ENCODE measurements at regions of chr14 and their contacts with region 1.

Region 1: GRCh38 chr14:105375635-105376057 is 22.7 kb upstream of the TEX22 start:
- DNase-seq: no peak
- H3K4me3 ChIP-seq: no peak overlapping the region
- H3K27ac ChIP-seq: no peak overlapping the region
- H3K4me1 ChIP-seq: no peaks in the 10 kb centered on the region
- H3K27me3 ChIP-seq: no peaks in the 10 kb centered on the region
- CTCF ChIP-seq: no peak
- EP300 ChIP-seq: no peak
- POLR2A ChIP-seq: no peak

Region 2: GRCh38 chr14:105223260-105223659 is 152.4 kb before region 1 on chr14:
- in situ Hi-C with region 1: no loop called
- intact Hi-C with region 1: no loop called
- DNase-seq: no peak
- H3K4me3 ChIP-seq: no peak overlapping the region
- H3K27ac ChIP-seq: no peak overlapping the region
- H3K4me1 ChIP-seq: no peaks in the 10 kb centered on the region
- H3K27me3 ChIP-seq: no peaks in the 10 kb centered on the region
- CTCF ChIP-seq: no peak
- EP300 ChIP-seq: no peak
- POLR2A ChIP-seq: no peak

Region 3: GRCh38 chr14:105448706-105449111 is 73.1 kb after region 1 on chr14:
- in situ Hi-C with region 1: no loop called
- intact Hi-C with region 1: loop called (anchors 10 kb)
- DNase-seq: peak; percentile 66
- H3K4me3 ChIP-seq: no peak overlapping the region
- H3K27ac ChIP-seq: no peak overlapping the region
- H3K4me1 ChIP-seq: peaks cover 0 to 4% (median 3%) of the 10 kb centered on the region in 4 donors
- H3K27me3 ChIP-seq: no peaks in the 10 kb centered on the region
- CTCF ChIP-seq: peak; percentile 82 to 92 (median 88)
- EP300 ChIP-seq: no peak
- POLR2A ChIP-seq: no peak

Region 4: GRCh38 chr14:105517096-105517495 is 141.4 kb after region 1 on chr14:
- in situ Hi-C with region 1: loop called in 2 of 4 experiments (anchors 10 kb)
- intact Hi-C with region 1: loop called (anchors 10 kb)
- DNase-seq: no peak
- H3K4me3 ChIP-seq: no peak overlapping the region
- H3K27ac ChIP-seq: no peak overlapping the region
- H3K4me1 ChIP-seq: no peaks in the 10 kb centered on the region
- H3K27me3 ChIP-seq: peaks cover 40% of the 10 kb centered on the region
- CTCF ChIP-seq: no peak
- EP300 ChIP-seq: no peak
- POLR2A ChIP-seq: no peak

Region 5: GRCh38 chr14:105806566-105806965 is 430.9 kb after region 1 on chr14:
- in situ Hi-C with region 1: no loop called
- intact Hi-C with region 1: no loop called
- DNase-seq: no peak
- H3K4me3 ChIP-seq: no peak overlapping the region
- H3K27ac ChIP-seq: no peak overlapping the region
- H3K4me1 ChIP-seq: no peaks in the 10 kb centered on the region
- H3K27me3 ChIP-seq: no peaks in the 10 kb centered on the region
- CTCF ChIP-seq: no peak
- EP300 ChIP-seq: no peak
- POLR2A ChIP-seq: no peak